ENCODE measurements at regions of chr11 and their contacts with region 1.

Region 1: DNA sequence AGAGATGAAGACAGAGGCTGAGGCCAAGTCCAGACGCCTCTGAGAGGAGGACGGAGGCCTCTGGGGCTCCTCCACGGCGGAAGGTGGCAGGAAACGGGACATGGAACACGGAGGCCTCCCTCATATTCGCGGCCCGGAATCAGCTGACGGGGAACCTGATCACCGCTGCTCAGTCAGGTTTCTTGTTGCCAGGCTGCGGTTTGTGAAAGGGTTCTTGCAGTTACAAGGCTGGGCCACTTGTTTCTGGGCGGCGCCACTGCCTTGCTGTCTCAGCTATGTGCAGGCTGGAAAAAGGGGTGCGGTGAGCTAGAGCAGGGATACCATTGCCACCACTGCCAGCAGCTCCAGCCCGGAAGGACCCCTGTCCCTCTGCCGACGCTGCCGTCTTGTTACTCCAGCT is 10.0 kb upstream of the MMP1 start:
- DNase-seq: peak; percentile 87
- ATAC-seq: peak; percentile 99
- H3K4me3 Mint-ChIP-seq: peak overlapping the region; percentile 68
- H3K27ac Mint-ChIP-seq: peak overlapping the region; percentile 80
- H3K4me1 Mint-ChIP-seq: peaks cover 25% of the 10 kb centered on the region
- H3K27me3 Mint-ChIP-seq: no peaks in the 10 kb centered on the region
- CTCF ChIP-seq: peak; percentile 58

Region 2: GRCh38 chr11:102794447-102794781 is 13.5 kb before region 1 on chr11:
- CTCF ChIA-PET with region 1: interaction called, 11 read pairs
- POLR2A ChIA-PET with region 1: no interaction called
- DNase-seq: peak; percentile 59
- ATAC-seq: peak; percentile 100
- H3K4me3 Mint-ChIP-seq: no peak overlapping the region
- H3K27ac Mint-ChIP-seq: 0 out of 2 replicates have a peak overlapping the region, but pooled peaks have one; percentile 76
- H3K4me1 Mint-ChIP-seq: peaks cover 2% of the 10 kb centered on the region; the same call in 1 of the 2 replicates
- H3K27me3 Mint-ChIP-seq: no peaks in the 10 kb centered on the region
- CTCF ChIP-seq: peak; percentile 70

Region 3: DNA sequence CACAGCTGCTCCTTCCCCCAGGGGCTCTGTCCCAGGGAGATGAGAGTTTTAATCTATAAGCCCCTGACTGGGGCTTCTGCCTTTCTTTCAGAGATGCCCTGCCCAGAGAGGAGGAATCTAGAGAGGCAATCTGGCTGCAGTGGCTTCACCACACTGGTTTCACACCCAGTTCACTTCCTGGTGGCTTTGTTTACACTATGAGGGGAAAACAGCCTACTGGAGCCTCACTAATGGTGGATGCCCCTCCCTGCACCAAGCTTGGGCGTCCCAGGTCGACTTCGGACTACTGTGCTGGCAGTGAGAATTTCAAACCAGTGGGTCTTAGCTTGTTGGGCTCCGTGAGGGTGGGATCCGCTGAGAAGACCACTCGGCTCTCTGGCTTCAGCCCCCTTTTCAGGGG is 11.6 kb after region 1 on chr11:
- CTCF ChIA-PET with region 1: interaction called, 10 read pairs
- POLR2A ChIA-PET with region 1: no interaction called
- DNase-seq: no peak
- ATAC-seq: peak; percentile 20; the same call in 1 of the 2 replicates
- H3K4me3 Mint-ChIP-seq: no peak overlapping the region
- H3K27ac Mint-ChIP-seq: no peak overlapping the region
- H3K4me1 Mint-ChIP-seq: no peaks in the 10 kb centered on the region
- H3K27me3 Mint-ChIP-seq: no peaks in the 10 kb centered on the region
- CTCF ChIP-seq: no peak

Region 4: GRCh38 chr11:102831489-102832440 is 23.8 kb after region 1 on chr11:
- CTCF ChIA-PET with region 1: interaction called, 11 read pairs
- POLR2A ChIA-PET with region 1: no interaction called
- DNase-seq: peak; percentile 77
- ATAC-seq: peak; percentile 91
- H3K4me3 Mint-ChIP-seq: peak overlapping the region; percentile 51
- H3K27ac Mint-ChIP-seq: no peak overlapping the region
- H3K4me1 Mint-ChIP-seq: peaks cover 32% of the 10 kb centered on the region
- H3K27me3 Mint-ChIP-seq: peaks cover 4% of the 10 kb centered on the region; the same call in 1 of the 2 replicates
- CTCF ChIP-seq: no peak

Region 5: GRCh38 chr11:102940714-102941588 is 133.0 kb after region 1 on chr11:
- CTCF ChIA-PET with region 1: interaction called, 10 read pairs
- POLR2A ChIA-PET with region 1: no interaction called
- DNase-seq: peak; percentile 47
- ATAC-seq: peak; percentile 96
- H3K4me3 Mint-ChIP-seq: no peak overlapping the region
- H3K27ac Mint-ChIP-seq: no peak overlapping the region
- H3K4me1 Mint-ChIP-seq: peaks cover 21% of the 10 kb centered on the region
- H3K27me3 Mint-ChIP-seq: no peaks in the 10 kb centered on the region
- CTCF ChIP-seq: peak; percentile 60

Measured in WTC11 (cell line).